ENCODE measurements at regions of chr3 and their contacts with region 1.

Region 1: DNA sequence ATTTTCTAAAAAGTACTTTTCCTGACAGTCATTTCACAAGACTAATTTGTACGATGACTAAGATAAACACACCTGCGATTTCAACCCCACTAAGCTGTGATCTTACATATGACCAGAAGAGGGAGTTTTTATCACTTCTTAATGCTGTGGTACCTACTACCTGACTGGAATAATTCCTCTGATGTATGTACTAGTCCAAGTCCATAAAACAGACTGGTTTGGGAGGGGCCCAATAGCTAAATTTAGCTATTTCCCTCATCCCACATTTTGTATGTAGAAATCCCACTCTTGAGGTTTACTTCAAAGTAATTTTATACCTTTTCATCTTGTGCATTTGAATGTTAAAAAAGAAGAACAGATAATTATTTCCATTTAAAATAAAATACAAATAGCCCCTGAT is 49.7 kb upstream of the SCAANT1 start:
- DNase-seq: no peak
- ATAC-seq: peak; percentile 80
- H3K4me3 ChIP-seq: no peak overlapping the region
- H3K27ac ChIP-seq: no peak overlapping the region
- H3K4me1 ChIP-seq: peaks cover 16% of the 10 kb centered on the region
- H3K27me3 ChIP-seq: no peaks in the 10 kb centered on the region
- CTCF ChIP-seq: peak; percentile 60 to 63 (median 62); a peak in 5 of 6 replicates
- EP300 ChIP-seq: no peak
- POLR2A ChIP-seq: no peak
- RAD21 ChIP-seq: peak; percentile 52

Region 2: DNA sequence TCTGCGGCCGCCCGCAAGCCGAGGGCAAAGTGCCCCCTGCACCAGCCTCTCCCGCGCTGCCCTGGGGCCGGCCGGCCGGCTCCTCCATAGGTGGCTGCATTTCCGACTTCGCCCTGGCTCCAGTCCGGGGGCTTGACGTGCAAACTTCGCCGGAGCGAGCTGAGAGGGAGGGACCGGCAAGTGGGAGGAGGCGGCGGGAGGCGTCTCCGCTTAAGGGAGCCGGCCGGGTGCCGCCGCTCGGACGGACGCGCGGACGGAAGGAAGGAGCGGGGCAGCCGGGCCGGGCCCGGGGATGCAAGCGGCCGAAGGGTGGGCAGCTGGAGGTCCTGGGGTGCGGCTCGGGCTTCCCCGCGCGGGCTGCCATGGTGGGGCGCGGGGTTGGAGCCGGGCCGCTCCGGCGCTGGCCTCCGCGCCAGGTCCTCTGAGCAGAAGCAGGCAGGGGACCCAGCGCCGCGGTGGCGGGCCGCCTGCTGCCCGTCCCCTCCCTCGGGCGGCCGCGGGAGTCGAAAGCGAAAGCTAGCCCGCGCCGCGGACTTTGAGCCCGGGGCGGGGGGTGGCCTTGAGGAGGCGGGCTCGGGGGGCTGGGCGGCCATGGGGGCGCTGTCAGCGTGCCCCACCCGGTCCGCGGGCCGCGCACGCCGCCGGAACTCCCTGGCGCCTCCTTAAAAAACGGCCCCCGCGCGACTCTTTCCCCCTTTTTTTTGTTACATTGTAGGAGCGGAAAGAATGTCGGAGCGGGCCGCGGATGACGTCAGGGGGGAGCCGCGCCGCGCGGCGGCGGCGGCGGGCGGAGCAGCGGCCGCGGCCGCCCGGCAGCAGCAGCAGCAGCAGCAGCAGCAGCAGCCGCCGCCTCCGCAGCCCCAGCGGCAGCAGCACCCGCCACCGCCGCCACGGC is 49.8 kb before region 1 on chr3 and contains the start of gene SCAANT1:
- CTCF ChIA-PET with region 1: interaction called, 8 read pairs
- POLR2A ChIA-PET with region 1: no interaction called
- RAD21 ChIA-PET with region 1: interaction called, 3 read pairs
- SMC1A ChIA-PET with region 1: interaction called, 3 read pairs
- in situ Hi-C with region 1: no loop called
- intact Hi-C with region 1: loop called (anchors 5 kb)
- DNase-seq: no peak
- ATAC-seq: peak; percentile 89
- H3K4me3 ChIP-seq: peak within 1 kb of the TSS; percentile 74
- H3K27ac ChIP-seq: peak within 1 kb of the TSS; percentile 86
- H3K4me1 ChIP-seq: peaks cover 20% of the 10 kb centered on the region
- H3K27me3 ChIP-seq: no peaks in the 10 kb centered on the region
- CTCF ChIP-seq: peak in 1 of 3 experiments; percentile 2; a peak in 1 of 6 replicates
- EP300 ChIP-seq: no peak
- POLR2A ChIP-seq: peak; percentile 84
- RAD21 ChIP-seq: no peak
- polyA plus RNA-seq, gene SCAANT1: 0.60 TPM in 1 of 2 experiments, not detected in the other

Region 3: DNA sequence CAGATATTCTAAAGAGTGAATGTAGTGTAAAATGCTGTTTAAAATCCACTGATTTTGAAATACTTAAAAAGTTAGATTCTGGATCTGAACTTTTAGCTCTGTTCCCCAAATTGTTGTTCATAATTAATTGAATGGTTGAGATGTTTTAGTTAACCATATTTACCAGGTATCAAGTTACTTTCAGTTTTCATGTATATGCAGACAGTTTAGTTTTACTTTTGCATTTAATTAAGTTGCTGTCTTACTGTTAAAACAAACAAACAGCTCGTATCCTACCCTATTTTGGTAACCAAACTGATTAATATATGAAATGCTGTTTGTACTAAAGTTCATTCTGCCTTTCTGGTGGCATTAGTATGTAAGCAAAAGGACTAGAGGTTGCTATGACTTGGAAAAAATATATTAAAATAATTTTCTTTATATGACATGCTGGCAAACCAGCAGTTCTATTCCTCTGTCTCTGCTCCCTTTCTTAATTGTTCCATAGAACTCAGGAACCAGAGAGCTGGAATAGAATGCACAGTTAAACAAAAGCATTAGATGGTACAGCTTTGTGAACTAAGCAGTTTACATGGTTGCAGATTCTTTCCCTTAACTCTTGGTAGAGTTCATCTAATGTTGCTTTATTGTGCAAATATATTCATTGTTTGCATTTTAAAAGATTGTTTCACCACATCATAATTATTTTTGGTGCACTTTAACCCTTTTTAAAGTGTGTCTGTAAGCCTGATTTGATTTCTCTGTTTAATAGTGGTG is 10.2 kb before region 1 on chr3:
- CTCF ChIA-PET with region 1: interaction called, 18 read pairs
- POLR2A ChIA-PET with region 1: interaction called, 3 read pairs
- RAD21 ChIA-PET with region 1: interaction called, 5 read pairs
- SMC1A ChIA-PET with region 1: interaction called, 8 read pairs
- in situ Hi-C with region 1: no loop called
- intact Hi-C with region 1: no loop called
- DNase-seq: no peak
- ATAC-seq: peak; percentile 73
- H3K4me3 ChIP-seq: peak overlapping the region; percentile 6; the same call in 1 of the 2 replicates
- H3K27ac ChIP-seq: peak overlapping the region; percentile 10; the same call in 1 of the 2 replicates
- H3K4me1 ChIP-seq: peaks cover 7% of the 10 kb centered on the region
- H3K27me3 ChIP-seq: no peaks in the 10 kb centered on the region
- CTCF ChIP-seq: no peak
- EP300 ChIP-seq: no peak
- POLR2A ChIP-seq: no peak
- RAD21 ChIP-seq: no peak

Region 4: DNA sequence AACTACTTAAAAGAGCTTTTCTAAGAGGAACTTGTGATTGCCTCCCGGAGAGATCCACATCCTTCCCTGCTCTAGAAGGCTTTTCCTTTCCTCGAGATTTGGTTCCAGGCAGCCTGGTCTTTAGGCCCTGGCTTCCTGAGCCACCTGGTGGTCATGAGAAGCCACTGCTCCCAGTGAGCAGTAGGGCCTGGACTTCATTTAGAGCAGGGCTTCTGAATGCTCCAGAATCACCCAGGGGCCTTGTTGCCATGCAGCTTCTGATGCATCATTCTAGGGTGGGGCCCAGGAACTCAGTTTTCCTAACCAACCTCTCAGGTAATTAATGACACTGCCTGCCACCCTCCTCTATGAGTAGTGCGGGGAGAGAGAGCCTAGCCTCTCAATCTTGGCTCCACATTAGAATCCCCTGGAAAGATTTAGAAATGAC is 31.8 kb after region 1 on chr3:
- CTCF ChIA-PET with region 1: interaction called, 154 read pairs
- POLR2A ChIA-PET with region 1: interaction called, 10 read pairs
- RAD21 ChIA-PET with region 1: interaction called, 6 read pairs
- SMC1A ChIA-PET with region 1: interaction called, 18 read pairs
- in situ Hi-C with region 1: no loop called
- intact Hi-C with region 1: no loop called
- DNase-seq: no peak
- ATAC-seq: peak; percentile 98
- H3K4me3 ChIP-seq: no peak overlapping the region
- H3K27ac ChIP-seq: no peak overlapping the region
- H3K4me1 ChIP-seq: no peaks in the 10 kb centered on the region
- H3K27me3 ChIP-seq: no peaks in the 10 kb centered on the region
- CTCF ChIP-seq: peak; percentile 87 to 89 (median 89)
- EP300 ChIP-seq: no peak
- POLR2A ChIP-seq: no peak
- RAD21 ChIP-seq: peak; percentile 86

Region 5: DNA sequence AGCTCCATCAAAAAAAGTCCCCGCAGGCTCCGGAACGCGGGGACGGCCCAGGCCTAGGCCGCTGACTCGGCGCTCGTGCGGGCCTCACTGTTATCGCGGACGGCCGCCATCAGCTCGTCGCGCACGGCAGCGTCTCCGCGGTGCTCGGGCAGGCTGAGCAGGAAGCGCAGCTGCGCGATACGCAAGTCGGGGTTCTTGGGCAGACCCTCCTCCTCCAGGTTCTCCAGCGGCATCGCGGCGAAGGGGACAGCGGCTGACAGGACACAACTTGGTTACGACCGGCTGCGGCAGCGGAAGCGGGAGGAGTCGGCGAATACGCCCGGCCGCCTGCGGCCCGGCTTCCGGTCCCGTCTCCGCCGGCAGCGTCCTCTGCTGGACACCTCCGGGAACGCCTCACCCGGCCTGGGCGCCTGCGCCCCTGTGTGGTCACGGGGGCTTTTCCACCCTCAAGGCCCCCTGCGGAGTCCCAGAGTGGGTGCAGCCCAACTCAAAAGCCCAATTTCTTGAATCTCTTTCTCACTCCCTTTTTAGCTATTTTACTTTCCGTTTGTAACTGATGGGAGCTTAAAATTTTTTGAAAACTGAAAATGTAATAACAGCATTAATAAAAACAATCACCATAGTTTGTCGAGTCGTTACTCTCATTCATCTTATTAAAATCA is 61.4 kb after region 1 on chr3 and contains the start of gene PSMD6:
- CTCF ChIA-PET with region 1: interaction called, 20 read pairs
- POLR2A ChIA-PET with region 1: no interaction called
- RAD21 ChIA-PET with region 1: interaction called, 3 read pairs
- SMC1A ChIA-PET with region 1: interaction called, 4 read pairs
- in situ Hi-C with region 1: no loop called
- intact Hi-C with region 1: no loop called
- DNase-seq: peak; percentile 49
- ATAC-seq: peak; percentile 95
- H3K4me3 ChIP-seq: peak within 1 kb of the TSS; percentile 86
- H3K27ac ChIP-seq: peak within 1 kb of the TSS; percentile 87
- H3K4me1 ChIP-seq: no peaks in the 10 kb centered on the region
- H3K27me3 ChIP-seq: no peaks in the 10 kb centered on the region
- CTCF ChIP-seq: peak; percentile 99 to 100 (median 100); a peak in 5 of 6 replicates
- EP300 ChIP-seq: 0 out of 4 replicates have a peak, but pooled peaks of 1 of the 2 experiments have one; percentile 18
- POLR2A ChIP-seq: peak; percentile 97
- RAD21 ChIP-seq: peak; percentile 28; the same call in 1 of the 2 replicates
- polyA plus RNA-seq, gene PSMD6: 84.3 to 124 TPM